PC-3 (cell line): ENCODE measurements at regions of chr4 and their contacts with region 1.

Region 1: DNA sequence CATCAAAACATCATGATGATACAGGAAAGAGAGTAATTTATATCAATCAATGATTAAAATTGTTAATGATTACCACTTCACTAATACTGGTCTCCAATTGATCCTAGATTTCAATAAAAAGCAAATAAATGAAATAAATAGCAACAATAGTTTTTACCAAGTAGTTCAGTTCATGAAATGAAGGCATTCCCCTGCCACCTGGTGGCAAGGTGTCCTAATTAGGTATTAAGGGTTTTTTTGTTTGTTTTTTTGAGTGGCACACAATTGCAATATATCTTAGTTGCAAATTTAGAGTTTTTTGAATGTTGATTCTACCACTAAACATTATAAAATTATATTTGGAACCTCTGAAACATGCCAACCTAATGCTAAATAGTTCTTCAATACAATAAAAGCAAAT is 157.4 kb upstream of the PDE5A start:
- DNase-seq: peak; percentile 44
- ATAC-seq: peak; percentile 29; the same call in 1 of the 2 replicates
- H3K4me3 ChIP-seq: no peak overlapping the region
- H3K27ac ChIP-seq: no peak overlapping the region
- H3K4me1 ChIP-seq: peaks cover 3% of the 10 kb centered on the region; the same call in 1 of the 2 replicates
- H3K27me3 ChIP-seq: no peaks in the 10 kb centered on the region
- CTCF ChIP-seq: peak; percentile 70

Region 2: GRCh38 chr4:119735165-119735651 is 50.8 kb before region 1 on chr4:
- CTCF ChIA-PET with region 1: no interaction called
- POLR2A ChIA-PET with region 1: no interaction called
- intact Hi-C with region 1: loop called (anchors 2 kb)
- DNase-seq: peak; percentile 89
- ATAC-seq: peak; percentile 87
- H3K4me3 ChIP-seq: no peak overlapping the region; the same call in 1 of the 2 replicates
- H3K27ac ChIP-seq: peak overlapping the region; percentile 77
- H3K4me1 ChIP-seq: peaks cover 56% of the 10 kb centered on the region
- H3K27me3 ChIP-seq: no peaks in the 10 kb centered on the region
- CTCF ChIP-seq: no peak

Region 3: GRCh38 chr4:119810001-119810400 is 24.0 kb after region 1 on chr4:
- CTCF ChIA-PET with region 1: no interaction called
- POLR2A ChIA-PET with region 1: no interaction called
- intact Hi-C with region 1: no loop called
- DNase-seq: no peak
- ATAC-seq: no peak
- H3K4me3 ChIP-seq: no peak overlapping the region
- H3K27ac ChIP-seq: no peak overlapping the region
- H3K4me1 ChIP-seq: no peaks in the 10 kb centered on the region
- H3K27me3 ChIP-seq: no peaks in the 10 kb centered on the region
- CTCF ChIP-seq: no peak

Region 4: DNA sequence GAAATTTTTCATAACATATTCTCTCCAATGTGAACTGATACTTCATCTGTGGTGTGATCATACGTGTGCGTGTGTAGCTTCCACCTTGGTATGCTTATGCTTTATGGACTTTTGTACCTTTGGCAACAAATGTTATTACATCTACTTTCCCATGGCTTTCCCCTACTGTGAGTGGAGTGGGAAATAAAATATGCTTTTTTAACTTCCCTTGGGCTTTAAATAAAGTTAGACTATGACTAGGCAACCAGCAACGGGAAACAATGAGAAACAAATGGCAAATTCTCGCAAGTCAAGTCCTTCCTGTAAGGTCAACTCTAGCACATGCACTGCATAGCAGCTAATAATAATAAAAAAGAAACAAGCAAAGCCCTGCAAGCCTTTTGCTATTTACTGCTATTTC is 47.6 kb after region 1 on chr4:
- CTCF ChIA-PET with region 1: no interaction called
- POLR2A ChIA-PET with region 1: no interaction called
- intact Hi-C with region 1: no loop called
- DNase-seq: no peak
- ATAC-seq: no peak
- H3K4me3 ChIP-seq: no peak overlapping the region
- H3K27ac ChIP-seq: no peak overlapping the region
- H3K4me1 ChIP-seq: no peaks in the 10 kb centered on the region
- H3K27me3 ChIP-seq: no peaks in the 10 kb centered on the region
- CTCF ChIP-seq: no peak

Region 5: GRCh38 chr4:119897260-119897659 is 111.3 kb after region 1 on chr4:
- CTCF ChIA-PET with region 1: no interaction called
- POLR2A ChIA-PET with region 1: no interaction called
- intact Hi-C with region 1: no loop called
- DNase-seq: no peak
- ATAC-seq: no peak
- H3K4me3 ChIP-seq: no peak overlapping the region
- H3K27ac ChIP-seq: no peak overlapping the region
- H3K4me1 ChIP-seq: no peaks in the 10 kb centered on the region; the same call in 1 of the 2 replicates
- H3K27me3 ChIP-seq: no peaks in the 10 kb centered on the region
- CTCF ChIP-seq: no peak

Region 6: DNA sequence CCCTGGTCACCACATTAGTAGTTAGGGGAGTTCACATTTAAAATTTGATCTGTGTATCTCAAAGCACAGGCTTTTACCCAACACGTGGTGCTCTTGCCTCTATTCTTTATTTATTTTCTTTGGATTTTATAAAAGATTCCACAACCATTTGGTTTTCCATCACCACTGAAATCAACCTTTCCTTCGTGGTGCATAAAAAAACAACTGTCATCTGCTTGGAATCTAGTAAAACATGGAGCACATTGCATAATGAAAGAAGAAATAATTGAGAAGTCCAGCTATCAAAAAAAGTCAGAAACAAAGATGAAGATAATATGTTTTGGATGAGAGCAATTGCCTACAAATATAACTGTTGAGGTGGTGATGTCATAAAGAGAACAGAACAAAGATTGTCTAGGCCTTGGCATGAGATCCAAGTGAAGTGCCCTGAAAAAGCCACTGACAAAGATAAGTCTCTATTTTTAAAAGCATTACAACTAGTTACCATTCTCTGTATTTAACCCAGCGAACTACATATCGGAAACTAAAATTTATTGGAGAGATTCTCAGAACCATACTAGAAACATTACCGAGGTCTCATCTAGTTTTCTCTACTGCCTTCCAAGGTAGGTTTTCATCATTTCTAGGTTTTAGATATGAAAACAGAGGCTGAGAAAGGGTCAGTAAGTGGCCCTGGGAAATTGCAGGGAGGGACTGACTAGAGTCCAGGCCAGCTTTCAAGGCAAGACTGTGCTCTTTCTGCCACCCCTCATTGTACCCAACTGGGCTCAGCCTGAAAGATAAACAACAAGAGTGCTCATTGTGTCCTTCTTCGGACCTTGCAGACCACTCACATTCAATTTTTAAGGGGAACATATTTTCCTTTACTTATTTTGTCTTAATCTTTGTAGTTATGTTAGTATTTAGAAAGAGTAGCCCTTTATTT is 153.4 kb after region 1 on chr4:
- CTCF ChIA-PET with region 1: no interaction called
- POLR2A ChIA-PET with region 1: no interaction called
- intact Hi-C with region 1: no loop called
- DNase-seq: no peak
- ATAC-seq: no peak
- H3K4me3 ChIP-seq: no peak overlapping the region
- H3K27ac ChIP-seq: no peak overlapping the region
- H3K4me1 ChIP-seq: no peaks in the 10 kb centered on the region
- H3K27me3 ChIP-seq: no peaks in the 10 kb centered on the region
- CTCF ChIP-seq: no peak

Region 7: DNA sequence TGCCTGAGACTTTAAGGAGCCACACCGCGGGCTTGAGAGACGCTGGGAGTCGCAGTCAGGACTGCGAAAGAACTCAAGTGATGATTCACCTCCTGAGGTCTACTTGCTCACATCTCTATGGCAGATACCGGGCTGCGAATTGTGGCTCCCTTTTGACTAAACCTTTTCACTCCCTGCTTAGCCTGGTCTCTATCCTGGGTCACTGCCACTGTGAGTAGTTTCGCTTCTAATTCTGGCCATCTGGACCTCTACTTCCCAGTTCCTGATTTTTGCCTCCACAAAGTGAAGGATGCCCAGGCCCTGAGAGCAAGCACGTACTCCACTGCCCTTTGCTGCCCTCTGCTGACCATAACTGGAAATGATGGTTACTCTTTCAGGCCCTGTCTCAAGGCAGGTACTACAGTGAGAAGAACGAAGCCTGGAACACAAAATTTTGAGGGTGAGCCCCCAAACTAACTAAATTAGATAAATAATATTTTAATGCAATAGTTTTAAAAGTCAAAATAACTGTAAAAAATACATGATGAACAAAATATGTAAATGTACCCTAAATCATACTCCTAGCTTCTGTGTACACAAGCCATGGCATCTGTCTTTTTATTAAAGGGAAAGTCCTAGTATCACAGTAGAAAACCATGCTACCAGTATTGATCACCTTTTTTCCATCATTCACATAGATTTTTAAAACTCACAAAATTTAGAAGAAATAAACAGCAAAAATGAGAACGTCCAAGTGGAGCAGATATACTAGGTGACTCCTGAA is 263.9 kb after region 1 on chr4:
- CTCF ChIA-PET with region 1: no interaction called
- POLR2A ChIA-PET with region 1: no interaction called
- intact Hi-C with region 1: loop called (anchors 1 kb)
- DNase-seq: peak; percentile 80
- ATAC-seq: peak; percentile 98
- H3K4me3 ChIP-seq: peak overlapping the region; percentile 23; the same call in 1 of the 2 replicates
- H3K27ac ChIP-seq: no peak overlapping the region
- H3K4me1 ChIP-seq: no peaks in the 10 kb centered on the region
- H3K27me3 ChIP-seq: no peaks in the 10 kb centered on the region
- CTCF ChIP-seq: peak; percentile 78